GM12878 (cell line): ENCODE measurements at regions of chr15 and their contacts with region 1.

Region 1: DNA sequence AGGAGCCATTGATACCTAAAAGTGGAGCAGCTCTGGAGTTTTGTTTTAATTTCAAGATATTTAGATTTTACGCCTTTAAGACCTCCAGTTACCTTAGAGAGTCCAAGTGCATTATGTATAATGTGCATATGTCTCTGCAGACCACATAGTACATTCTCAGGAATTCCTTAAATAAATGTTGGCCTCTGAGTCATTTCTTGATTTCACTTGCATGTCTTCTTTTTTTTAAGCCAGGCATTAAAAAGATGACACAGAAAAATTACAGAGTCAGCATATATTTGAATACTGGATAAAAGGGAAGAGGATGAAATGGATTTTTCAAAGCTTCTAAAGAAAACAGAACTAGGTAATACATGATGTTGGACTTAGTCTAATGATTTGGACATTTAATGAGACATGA is 125.2 kb downstream of the TMCO5A start:
- DNase-seq: no peak
- ATAC-seq: peak; percentile 44
- H3K4me3 ChIP-seq: no peak overlapping the region
- H3K27ac ChIP-seq: no peak overlapping the region
- H3K4me1 ChIP-seq: peaks cover 4% of the 10 kb centered on the region; the same call in 1 of the 2 replicates
- H3K27me3 ChIP-seq: no peaks in the 10 kb centered on the region
- CTCF ChIP-seq: no peak
- EP300 ChIP-seq: no peak
- POLR2A ChIP-seq: no peak
- RAD21 ChIP-seq: no peak

Region 2: DNA sequence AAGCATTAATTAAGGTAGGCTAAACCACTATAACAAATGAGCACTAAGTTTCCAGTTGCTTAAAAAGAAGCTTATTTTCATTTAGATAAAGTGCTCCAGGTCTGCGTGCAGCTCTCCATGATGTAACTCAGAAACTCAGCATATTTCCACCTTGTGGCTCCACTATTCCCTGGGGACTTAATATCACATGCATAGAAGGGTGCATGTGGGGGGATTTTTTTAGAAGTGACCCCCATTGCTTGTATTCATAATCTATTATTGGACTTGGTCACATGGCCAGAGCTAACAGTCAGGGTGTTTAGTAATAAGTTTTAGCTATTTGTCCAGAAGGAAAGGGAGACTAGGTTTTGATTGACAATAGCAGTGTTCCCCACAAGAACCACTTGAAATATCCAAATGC is 38.4 kb before region 1 on chr15:
- CTCF ChIA-PET with region 1: interaction called, 3 read pairs
- POLR2A ChIA-PET with region 1: interaction called, 3 read pairs
- RAD21 ChIA-PET with region 1: interaction called, 5 read pairs
- SMC1A ChIA-PET with region 1: interaction called, 5 read pairs
- in situ Hi-C with region 1: no loop called
- intact Hi-C with region 1: loop called (anchors 5 kb)
- DNase-seq: no peak
- ATAC-seq: peak; percentile 73
- H3K4me3 ChIP-seq: no peak overlapping the region
- H3K27ac ChIP-seq: no peak overlapping the region
- H3K4me1 ChIP-seq: no peaks in the 10 kb centered on the region
- H3K27me3 ChIP-seq: no peaks in the 10 kb centered on the region
- CTCF ChIP-seq: no peak
- EP300 ChIP-seq: peak; percentile 51 to 64; a peak in 3 of 4 replicates
- POLR2A ChIP-seq: no peak
- RAD21 ChIP-seq: no peak

Region 3: DNA sequence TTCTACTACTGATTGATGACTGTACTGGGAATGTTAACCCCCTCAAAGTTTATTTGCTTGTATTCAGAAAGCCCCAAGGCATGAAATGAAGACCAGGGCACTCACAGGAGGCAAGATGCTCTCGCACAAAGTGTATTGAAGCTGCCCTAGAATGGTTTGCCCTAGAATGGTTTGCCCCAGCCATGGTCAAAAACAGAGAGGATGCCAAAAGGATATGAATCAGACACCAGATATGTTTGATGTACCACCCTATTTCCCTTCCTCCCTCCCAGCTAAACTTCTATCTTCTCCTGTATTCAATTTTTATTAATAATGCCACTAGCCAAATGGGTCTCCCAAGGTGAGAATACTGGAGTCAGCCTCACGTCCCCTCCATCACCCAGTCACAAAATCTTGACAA is 24.0 kb before region 1 on chr15:
- CTCF ChIA-PET with region 1: interaction called, 3 read pairs
- POLR2A ChIA-PET with region 1: interaction called, 3 read pairs
- RAD21 ChIA-PET with region 1: interaction called, 12 read pairs
- SMC1A ChIA-PET with region 1: interaction called, 12 read pairs
- in situ Hi-C with region 1: no loop called
- intact Hi-C with region 1: no loop called
- DNase-seq: no peak
- ATAC-seq: no peak
- H3K4me3 ChIP-seq: no peak overlapping the region
- H3K27ac ChIP-seq: no peak overlapping the region
- H3K4me1 ChIP-seq: no peaks in the 10 kb centered on the region
- H3K27me3 ChIP-seq: no peaks in the 10 kb centered on the region; a peak in 1 of 4 replicates
- CTCF ChIP-seq: no peak
- EP300 ChIP-seq: no peak
- POLR2A ChIP-seq: no peak
- RAD21 ChIP-seq: no peak

Region 4: GRCh38 chr15:38093931-38094330 is 34.3 kb after region 1 on chr15:
- CTCF ChIA-PET with region 1: no interaction called
- POLR2A ChIA-PET with region 1: no interaction called
- RAD21 ChIA-PET with region 1: no interaction called
- SMC1A ChIA-PET with region 1: no interaction called
- in situ Hi-C with region 1: no loop called
- intact Hi-C with region 1: no loop called
- DNase-seq: no peak
- ATAC-seq: no peak
- H3K4me3 ChIP-seq: no peak overlapping the region
- H3K27ac ChIP-seq: no peak overlapping the region
- H3K4me1 ChIP-seq: no peaks in the 10 kb centered on the region
- H3K27me3 ChIP-seq: no peaks in the 10 kb centered on the region
- CTCF ChIP-seq: no peak
- EP300 ChIP-seq: no peak
- POLR2A ChIP-seq: no peak
- RAD21 ChIP-seq: no peak

Region 5: DNA sequence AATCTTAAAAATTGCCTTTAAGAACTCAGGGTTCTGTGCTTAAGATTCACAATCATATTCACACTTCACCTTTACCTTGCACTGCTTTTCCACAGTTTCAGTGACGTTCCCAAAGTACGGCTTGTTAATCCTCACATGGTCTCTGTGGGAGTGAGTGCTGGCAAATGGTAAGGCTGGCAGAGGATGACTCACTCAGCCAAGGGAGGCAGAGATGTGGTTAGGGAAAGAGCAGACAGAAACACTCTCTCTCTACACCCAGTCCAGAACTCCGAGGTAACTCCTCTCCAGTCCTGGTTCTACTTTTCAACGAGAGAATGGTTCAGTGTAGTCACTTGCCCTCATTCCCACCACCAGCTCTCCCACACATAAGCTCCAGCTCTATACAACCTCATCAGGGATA is 471.8 kb after region 1 on chr15:
- CTCF ChIA-PET with region 1: no interaction called
- POLR2A ChIA-PET with region 1: no interaction called
- RAD21 ChIA-PET with region 1: no interaction called
- SMC1A ChIA-PET with region 1: no interaction called
- in situ Hi-C with region 1: no loop called
- intact Hi-C with region 1: no loop called
- DNase-seq: no peak
- ATAC-seq: no peak
- H3K4me3 ChIP-seq: no peak overlapping the region
- H3K27ac ChIP-seq: no peak overlapping the region
- H3K4me1 ChIP-seq: no peaks in the 10 kb centered on the region
- H3K27me3 ChIP-seq: no peaks in the 10 kb centered on the region
- CTCF ChIP-seq: no peak
- EP300 ChIP-seq: no peak
- POLR2A ChIP-seq: no peak
- RAD21 ChIP-seq: no peak